HAP-1 (cell line): ENCODE measurements at regions of chr14 and their contacts with region 1.

Region 1: DNA sequence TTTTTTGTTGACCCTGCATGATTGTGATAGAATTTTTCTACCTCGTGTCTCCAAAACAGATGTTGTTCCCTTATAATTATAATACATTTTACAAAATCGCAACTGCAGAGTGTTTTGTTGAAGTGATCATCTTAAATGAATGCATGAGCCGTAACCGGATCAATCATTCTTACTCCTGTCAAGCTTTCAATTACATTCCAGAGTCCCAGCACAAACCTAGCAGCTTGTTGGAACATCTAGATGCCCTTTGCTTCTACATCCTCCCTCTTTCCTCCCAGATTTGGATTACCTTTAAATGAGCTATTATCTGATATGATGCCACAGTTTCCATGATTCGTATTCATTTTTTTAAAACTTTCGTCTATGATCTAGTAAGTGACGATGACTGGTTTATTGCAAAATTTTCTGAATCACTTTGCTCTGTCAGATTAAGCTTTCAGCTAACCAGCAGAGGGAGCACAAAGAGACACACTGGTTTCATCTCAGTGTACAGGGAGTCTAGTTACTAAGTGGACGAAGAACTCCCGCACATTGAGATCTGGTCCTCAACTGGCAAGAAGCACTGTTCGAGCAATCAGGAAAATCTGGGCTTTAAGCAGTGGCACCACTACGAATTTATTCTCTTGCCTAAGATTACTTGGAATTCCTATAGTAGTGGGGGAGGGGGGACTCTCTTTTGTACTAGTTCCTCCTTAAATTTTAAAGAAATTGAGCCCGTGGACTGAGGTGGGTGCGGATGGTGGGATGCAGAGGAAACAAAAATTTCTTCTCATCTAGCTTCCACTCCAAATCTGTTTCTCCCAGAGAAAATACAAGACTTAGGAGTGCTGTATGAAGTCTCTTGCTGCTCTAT is 40.9 kb downstream of the TSHR start:
- DNase-seq: peak; percentile 49 to 65
- H3K4me3 ChIP-seq: no peak overlapping the region
- H3K4me1 ChIP-seq: no peaks in the 10 kb centered on the region
- H3K27me3 ChIP-seq: peaks cover 17% of the 10 kb centered on the region

Region 2: GRCh38 chr14:81464247-81465002 is 468.1 kb after region 1 on chr14:
- in situ Hi-C with region 1: loop called (anchors 10 kb)
- DNase-seq: peak; percentile 54 to 75
- H3K4me3 ChIP-seq: peak overlapping the region; percentile 23
- H3K4me1 ChIP-seq: peaks cover 4% of the 10 kb centered on the region; the same call in 1 of the 2 replicates
- H3K27me3 ChIP-seq: no peaks in the 10 kb centered on the region